ENCODE measurements at regions of chr14 and their contacts with region 1.

Region 1: DNA sequence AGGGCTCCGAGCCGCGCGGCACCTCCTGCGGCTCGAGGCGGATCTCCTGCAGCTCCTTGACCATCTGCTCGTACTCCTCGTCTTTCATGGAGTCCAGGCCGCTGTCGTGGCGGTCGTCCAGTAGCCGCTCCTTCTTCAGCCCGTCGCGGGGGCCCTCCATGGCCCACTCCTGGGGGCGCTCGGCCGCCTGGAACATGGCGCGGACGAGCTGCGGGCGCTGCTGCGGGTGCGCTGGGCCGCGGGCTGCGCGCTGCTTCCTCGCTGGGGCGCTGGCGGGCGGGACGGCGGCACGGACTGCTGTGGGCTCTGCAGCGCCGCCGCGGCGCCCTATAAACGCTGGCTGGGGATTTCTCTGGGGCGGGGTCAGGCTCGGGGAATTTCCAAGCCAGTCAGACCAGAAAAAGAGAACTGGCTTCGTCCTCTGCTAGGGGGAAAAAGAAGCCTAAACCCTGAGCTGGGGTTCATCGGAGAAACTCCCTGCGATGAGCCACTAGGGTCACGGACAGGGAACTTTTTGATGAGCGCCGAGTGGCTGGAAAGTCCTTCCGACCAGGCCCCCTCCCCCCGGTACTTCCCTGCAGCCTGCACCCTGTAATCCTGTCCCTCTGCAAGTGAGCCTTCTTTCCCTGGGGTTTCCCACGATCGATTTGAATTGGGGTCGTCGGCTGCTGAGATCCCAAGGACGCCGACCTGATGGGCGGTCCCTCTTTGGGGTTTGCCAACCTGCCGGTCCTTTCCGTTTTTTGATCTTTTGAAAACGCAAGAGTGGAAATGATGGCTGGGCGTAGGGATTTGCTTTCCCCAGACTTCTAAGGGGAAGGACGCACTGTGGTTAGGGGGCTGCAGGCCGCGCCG is at the start of gene NFKBIA:
- DNase-seq: peak; percentile 76 to 97 (median 94)
- ATAC-seq: peak; percentile 69 to 75 (median 75)
- H3K4me3 ChIP-seq: peak within 1 kb of the TSS; percentile 74 to 80
- H3K4me3 Mint-ChIP-seq: peak within 1 kb of the TSS; percentile 91 to 94 (median 93)
- H3K27ac ChIP-seq: peak within 1 kb of the TSS; percentile 96
- H3K27ac Mint-ChIP-seq: peak within 1 kb of the TSS; percentile 97 to 98
- H3K4me1 ChIP-seq: peaks cover 35 to 46% of the 10 kb centered on the region in 2 experiments
- H3K4me1 Mint-ChIP-seq: peaks cover 54 to 61% (median 56%) of the 10 kb centered on the region in 3 donors
- H3K27me3 ChIP-seq: no peaks in the 10 kb centered on the region
- H3K27me3 Mint-ChIP-seq: no peaks in the 10 kb centered on the region
- total RNA-seq, gene NFKBIA: 129 to 1,245 (median 169) TPM

Region 2: DNA sequence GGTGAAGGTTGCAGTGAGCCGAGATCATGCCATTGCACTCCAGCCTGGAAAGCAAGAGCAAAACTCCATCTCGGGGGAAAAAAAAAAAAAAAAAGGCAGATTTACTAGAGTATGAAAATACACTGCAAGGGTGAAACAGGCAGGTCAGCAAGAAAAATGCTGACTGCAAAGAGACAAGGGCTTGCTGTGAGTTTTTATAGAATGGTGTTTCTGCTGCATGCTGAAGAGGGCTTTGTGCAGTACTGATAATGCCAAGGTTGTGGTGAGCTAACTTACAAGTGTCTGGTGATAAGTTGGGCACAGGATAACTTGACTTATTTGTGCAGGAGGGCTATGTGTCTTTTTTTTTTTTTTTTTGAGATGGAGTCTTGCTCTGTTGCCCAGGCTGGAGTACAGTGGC is 447.7 kb before region 1 on chr14:
- CTCF ChIA-PET with region 1: no interaction called
- POLR2A ChIA-PET with region 1: interaction called in 1 of 2 experiments, 10 read pairs
- DNase-seq: no peak
- ATAC-seq: no peak
- H3K4me3 ChIP-seq: no peak overlapping the region
- H3K4me3 Mint-ChIP-seq: no peak overlapping the region
- H3K27ac ChIP-seq: no peak overlapping the region
- H3K27ac Mint-ChIP-seq: no peak overlapping the region
- H3K4me1 ChIP-seq: no peaks in the 10 kb centered on the region
- H3K4me1 Mint-ChIP-seq: peaks cover 3 to 6% (median 4%) of the 10 kb centered on the region in 3 donors
- H3K27me3 ChIP-seq: no peaks in the 10 kb centered on the region
- H3K27me3 Mint-ChIP-seq: no peaks in the 10 kb centered on the region

Region 3: GRCh38 chr14:35121887-35122695 is 282.6 kb before region 1 on chr14 and contains the starts of genes PPP2R3C and PRORP:
- CTCF ChIA-PET with region 1: interaction called in 1 of 2 experiments, 26 read pairs
- POLR2A ChIA-PET with region 1: interaction called, 12 to 32 read pairs
- DNase-seq: peak; percentile 76 to 94 (median 92)
- ATAC-seq: peak; percentile 84 to 91 (median 86)
- H3K4me3 ChIP-seq: peak within 1 kb of the TSS; percentile 92 to 94
- H3K4me3 Mint-ChIP-seq: peak within 1 kb of the TSS; percentile 98 to 99 (median 98)
- H3K27ac ChIP-seq: peak within 1 kb of the TSS; percentile 99
- H3K27ac Mint-ChIP-seq: peak within 1 kb of the TSS; percentile 100
- H3K4me1 ChIP-seq: peaks cover 15 to 46% of the 10 kb centered on the region in 2 experiments
- H3K4me1 Mint-ChIP-seq: peaks cover 74 to 78% (median 75%) of the 10 kb centered on the region in 3 donors
- H3K27me3 ChIP-seq: no peaks in the 10 kb centered on the region
- H3K27me3 Mint-ChIP-seq: no peaks in the 10 kb centered on the region
- total RNA-seq, gene PPP2R3C: 28.1 to 40.5 (median 32.9) TPM
- total RNA-seq, gene PRORP: 31.9 to 43.3 (median 35.9) TPM

Region 4: GRCh38 chr14:35201066-35201465 is 203.6 kb before region 1 on chr14:
- CTCF ChIA-PET with region 1: no interaction called
- POLR2A ChIA-PET with region 1: interaction called in 1 of 2 experiments, 20 read pairs
- DNase-seq: peak in 2 of 35 experiments; percentile 8 to 36
- ATAC-seq: peak; percentile 53 to 64 (median 59)
- H3K4me3 ChIP-seq: no peak overlapping the region
- H3K4me3 Mint-ChIP-seq: peak overlapping the region in 2 of 3 donors; percentile 21 to 36
- H3K27ac ChIP-seq: peak overlapping the region; percentile 54
- H3K27ac Mint-ChIP-seq: peak overlapping the region; percentile 82 to 85
- H3K4me1 ChIP-seq: peaks cover 16 to 29% of the 10 kb centered on the region in 2 experiments
- H3K4me1 Mint-ChIP-seq: peaks cover 34 to 58% (median 51%) of the 10 kb centered on the region in 3 donors
- H3K27me3 ChIP-seq: no peaks in the 10 kb centered on the region
- H3K27me3 Mint-ChIP-seq: no peaks in the 10 kb centered on the region

Region 5: GRCh38 chr14:35285168-35286002 is 119.3 kb before region 1 on chr14:
- CTCF ChIA-PET with region 1: interaction called, 5 to 11 read pairs
- POLR2A ChIA-PET with region 1: interaction called, 5 to 12 read pairs
- DNase-seq: peak in 1 of 35 experiments; percentile 41
- ATAC-seq: peak; percentile 36 to 67 (median 48)
- H3K4me3 ChIP-seq: no peak overlapping the region
- H3K4me3 Mint-ChIP-seq: peak overlapping the region in 2 of 3 donors; percentile 10 to 67
- H3K27ac ChIP-seq: peak overlapping the region; percentile 66
- H3K27ac Mint-ChIP-seq: peak overlapping the region; percentile 84 to 88
- H3K4me1 ChIP-seq: peaks cover 11 to 27% of the 10 kb centered on the region in 2 experiments
- H3K4me1 Mint-ChIP-seq: peaks cover 33 to 36% (median 36%) of the 10 kb centered on the region in 3 donors
- H3K27me3 ChIP-seq: no peaks in the 10 kb centered on the region
- H3K27me3 Mint-ChIP-seq: no peaks in the 10 kb centered on the region

Region 6: DNA sequence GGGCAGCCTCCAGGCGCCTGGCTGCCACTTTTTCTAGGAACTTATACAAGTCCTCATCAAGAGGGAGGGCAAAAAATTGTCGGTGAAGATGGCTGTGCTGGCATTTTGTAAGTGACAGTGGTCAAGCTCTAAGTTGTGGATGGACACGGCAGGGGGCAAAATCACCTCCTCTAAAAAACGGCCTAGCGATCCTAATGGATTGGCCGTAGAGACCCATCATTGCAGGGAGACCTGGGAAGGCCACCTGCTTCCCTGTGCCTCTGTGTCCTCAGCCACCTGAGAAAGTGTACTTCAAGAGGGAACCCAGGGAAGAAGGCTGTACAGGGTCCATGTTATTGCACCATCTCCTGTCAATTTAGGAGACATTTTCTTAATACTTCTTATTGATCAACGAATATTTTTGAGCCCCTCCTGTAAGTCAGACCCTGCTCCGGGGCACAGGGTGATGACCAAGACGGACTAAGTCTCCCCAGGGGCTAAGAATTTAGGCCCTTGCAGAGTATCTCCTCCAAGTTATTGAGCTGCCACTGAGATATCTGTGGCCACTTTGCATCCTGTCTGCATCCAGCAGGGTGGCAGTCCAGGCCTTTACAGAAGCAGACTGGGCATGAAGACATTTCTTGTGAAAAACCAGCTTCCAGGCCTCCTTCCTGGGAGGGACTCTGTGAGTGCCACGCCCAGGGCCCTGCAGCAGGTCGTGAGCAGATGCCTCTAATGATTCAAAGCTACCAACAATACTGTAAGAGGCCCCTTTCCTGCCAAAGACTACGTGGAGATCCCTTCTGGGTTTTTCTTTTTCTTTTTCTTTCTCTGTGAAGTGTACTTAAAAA is 71.9 kb before region 1 on chr14:
- CTCF ChIA-PET with region 1: no interaction called
- POLR2A ChIA-PET with region 1: interaction called, 13 to 17 read pairs
- DNase-seq: peak in 25 of 35 experiments; percentile 12 to 54 (median 34)
- ATAC-seq: peak; percentile 73 to 91 (median 84)
- H3K4me3 ChIP-seq: peak overlapping the region in 1 of 2 donors; percentile 25
- H3K4me3 Mint-ChIP-seq: peak overlapping the region; percentile 10 to 61 (median 43)
- H3K27ac ChIP-seq: peak overlapping the region; percentile 86
- H3K27ac Mint-ChIP-seq: peak overlapping the region; percentile 93
- H3K4me1 ChIP-seq: peaks cover 11 to 25% of the 10 kb centered on the region in 2 experiments
- H3K4me1 Mint-ChIP-seq: peaks cover 27 to 30% (median 28%) of the 10 kb centered on the region in 3 donors
- H3K27me3 ChIP-seq: no peaks in the 10 kb centered on the region
- H3K27me3 Mint-ChIP-seq: no peaks in the 10 kb centered on the region

Region 7: GRCh38 chr14:35416108-35416750 is 11.6 kb after region 1 on chr14:
- CTCF ChIA-PET with region 1: interaction called, 20 to 63 read pairs
- POLR2A ChIA-PET with region 1: interaction called, 70 to 242 read pairs
- DNase-seq: peak in 28 of 35 experiments; percentile 19 to 87 (median 45)
- ATAC-seq: peak; percentile 18 to 75 (median 34)
- H3K4me3 ChIP-seq: no peak overlapping the region
- H3K4me3 Mint-ChIP-seq: peak overlapping the region in 2 of 3 donors; percentile 35 to 65
- H3K27ac ChIP-seq: peak overlapping the region; percentile 83
- H3K27ac Mint-ChIP-seq: peak overlapping the region; percentile 85 to 87
- H3K4me1 ChIP-seq: peaks cover 17 to 42% of the 10 kb centered on the region in 2 experiments
- H3K4me1 Mint-ChIP-seq: peaks cover 39 to 50% (median 49%) of the 10 kb centered on the region in 3 donors
- H3K27me3 ChIP-seq: no peaks in the 10 kb centered on the region
- H3K27me3 Mint-ChIP-seq: no peaks in the 10 kb centered on the region

Measured in T-cell (primary cell).